ENCODE measurements at regions of chr14 and their contacts with region 1.

Region 1: GRCh38 chr14:35416108-35416750 is 11.7 kb upstream of the NFKBIA start:
- DNase-seq: no peak
- H3K4me3 ChIP-seq: no peak overlapping the region
- H3K27ac ChIP-seq: no peak overlapping the region
- H3K27me3 ChIP-seq: no peaks in the 10 kb centered on the region
- CTCF ChIP-seq: no peak

Region 2: DNA sequence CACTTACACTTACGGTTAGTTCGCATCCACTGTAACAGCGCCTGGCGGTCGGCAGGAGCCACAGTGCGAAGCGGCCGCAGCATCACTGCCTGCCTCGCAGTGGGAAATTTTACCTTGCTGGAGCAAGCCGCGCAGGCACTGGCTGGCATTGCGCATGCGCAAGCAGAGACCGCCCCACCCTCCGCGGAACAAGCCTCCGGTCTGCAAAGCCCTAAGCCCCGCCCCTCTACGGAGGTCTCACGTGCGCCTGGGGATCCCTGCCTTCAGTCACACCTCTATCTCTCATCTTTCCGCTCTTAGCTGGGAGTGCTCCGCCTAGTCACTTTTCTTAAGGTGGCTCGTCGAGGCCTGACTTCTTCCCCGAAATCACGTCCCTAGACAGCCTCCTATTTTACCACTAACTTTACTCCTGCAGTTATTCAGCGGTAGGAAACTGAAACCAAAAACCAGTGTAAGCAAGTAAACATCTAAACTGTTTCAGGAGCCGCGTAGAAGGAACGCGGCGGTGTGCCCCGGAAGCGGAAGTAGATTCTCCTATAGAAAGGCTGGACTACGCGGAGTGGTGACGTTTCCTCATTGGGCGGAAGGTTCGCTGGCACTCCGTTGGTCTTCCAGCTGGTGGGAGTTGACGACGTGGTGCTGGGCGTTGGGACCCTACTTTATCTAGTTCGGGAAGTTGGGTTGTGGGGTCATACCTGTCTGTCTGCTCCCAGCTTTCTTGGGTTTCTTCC is 433.6 kb before region 1 on chr14 and contains the start of gene SRP54:
- intact Hi-C with region 1: loop called in 1 of 2 experiments (anchors 5 kb)
- DNase-seq: peak; percentile 93 to 99 (median 97)
- H3K4me3 ChIP-seq: peak within 1 kb of the TSS; percentile 69 to 100 (median 92)
- H3K27ac ChIP-seq: peak within 1 kb of the TSS; percentile 93 to 100 (median 99)
- H3K27me3 ChIP-seq: no peaks in the 10 kb centered on the region
- CTCF ChIP-seq: peak in 17 of 56 donors; percentile 1 to 35 (median 16)
- total RNA-seq, gene SRP54: 20.1 to 61.6 (median 44.8) TPM

Region 3: GRCh38 chr14:35134328-35135123 is 281.7 kb before region 1 on chr14:
- intact Hi-C with region 1: loop called in 1 of 2 experiments (anchors 5 kb)
- DNase-seq: no peak
- H3K4me3 ChIP-seq: no peak overlapping the region
- H3K27ac ChIP-seq: peak overlapping the region in 49 of 59 donors; percentile 6 to 87 (median 66)
- H3K27me3 ChIP-seq: no peaks in the 10 kb centered on the region
- CTCF ChIP-seq: no peak

Region 4: GRCh38 chr14:35215110-35215876 is 200.9 kb before region 1 on chr14:
- intact Hi-C with region 1: loop called in 1 of 2 experiments (anchors 5 kb)
- DNase-seq: no peak
- H3K4me3 ChIP-seq: no peak overlapping the region
- H3K27ac ChIP-seq: no peak overlapping the region
- H3K27me3 ChIP-seq: no peaks in the 10 kb centered on the region
- CTCF ChIP-seq: peak in 53 of 56 donors; percentile 21 to 72 (median 50)

Region 5: GRCh38 chr14:35687335-35687939 is 271.2 kb after region 1 on chr14:
- intact Hi-C with region 1: loop called in 1 of 2 experiments (anchors 10 kb)
- DNase-seq: peak in 2 of 10 donors; percentile 15 to 43
- H3K4me3 ChIP-seq: no peak overlapping the region
- H3K27ac ChIP-seq: no peak overlapping the region
- H3K27me3 ChIP-seq: no peaks in the 10 kb centered on the region
- CTCF ChIP-seq: peak; percentile 41 to 84 (median 72)